Caco-2 (cell line): ENCODE measurements at regions of chr13 and their contacts with region 1.

Region 1: DNA sequence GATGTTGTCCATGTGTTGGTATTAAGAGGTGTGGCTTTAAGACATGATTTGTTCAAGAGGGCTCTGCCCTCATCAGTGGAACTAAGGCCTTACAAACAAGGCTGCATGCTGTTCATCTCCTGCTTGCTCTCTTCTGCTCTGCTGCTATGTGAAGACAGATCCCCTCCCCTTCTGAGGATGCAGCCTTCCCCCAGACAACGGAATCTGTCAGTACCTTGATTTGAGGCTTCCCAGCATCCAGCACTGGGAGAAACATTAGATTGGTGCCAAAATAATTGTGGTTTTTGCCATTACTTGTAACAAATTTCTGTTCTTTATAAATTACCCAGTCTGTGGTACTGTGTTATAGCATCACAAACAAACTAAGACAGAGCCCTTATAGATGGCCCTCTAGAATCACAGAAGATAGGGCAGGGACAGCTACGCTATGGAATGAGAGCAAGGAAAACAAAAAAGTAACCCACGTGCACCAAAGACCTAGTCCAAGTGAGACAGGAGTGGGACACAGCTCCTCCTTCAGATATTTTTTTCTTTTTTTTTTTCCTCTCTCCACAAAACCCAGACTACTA is 151.5 kb upstream of the RXFP2 start:
- DNase-seq: peak in 1 of 2 experiments; percentile 15
- H3K4me3 ChIP-seq: no peak overlapping the region
- H3K4me3 Mint-ChIP-seq: peak overlapping the region; percentile 58
- H3K27ac Mint-ChIP-seq: peak overlapping the region; percentile 96
- H3K4me1 ChIP-seq: peaks cover 54% of the 10 kb centered on the region
- H3K4me1 Mint-ChIP-seq: peaks cover 28% of the 10 kb centered on the region
- H3K27me3 ChIP-seq: no peaks in the 10 kb centered on the region
- H3K27me3 Mint-ChIP-seq: no peaks in the 10 kb centered on the region
- CTCF ChIP-seq: no peak

Region 2: DNA sequence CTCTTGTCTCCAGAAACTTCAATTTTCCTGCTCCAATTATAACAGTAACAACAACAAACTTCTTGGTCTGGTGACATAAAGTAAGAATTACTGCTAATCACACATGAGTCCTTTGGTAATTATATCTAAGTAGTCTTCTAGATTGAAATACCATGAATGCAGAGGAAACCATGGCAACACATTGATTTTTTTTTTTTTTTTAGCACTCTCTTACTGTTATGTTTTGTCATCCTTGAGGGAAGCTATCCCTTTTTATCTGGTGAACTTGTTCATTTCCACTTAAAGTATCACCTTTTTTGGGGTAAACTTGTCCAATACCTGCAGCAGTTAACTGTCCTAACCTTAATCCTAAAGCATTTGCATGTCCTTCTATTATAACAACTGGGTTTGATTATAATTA is 131.7 kb before region 1 on chr13:
- CTCF ChIA-PET with region 1: no interaction called
- POLR2A ChIA-PET with region 1: no interaction called
- intact Hi-C with region 1: no loop called
- DNase-seq: no peak
- H3K4me3 ChIP-seq: no peak overlapping the region
- H3K4me3 Mint-ChIP-seq: no peak overlapping the region
- H3K27ac Mint-ChIP-seq: no peak overlapping the region
- H3K4me1 ChIP-seq: no peaks in the 10 kb centered on the region
- H3K4me1 Mint-ChIP-seq: no peaks in the 10 kb centered on the region
- H3K27me3 ChIP-seq: no peaks in the 10 kb centered on the region; the same call in 1 of the 2 replicates
- H3K27me3 Mint-ChIP-seq: no peaks in the 10 kb centered on the region
- CTCF ChIP-seq: no peak

Region 3: GRCh38 chr13:31605076-31605858 is 17.5 kb after region 1 on chr13:
- CTCF ChIA-PET with region 1: no interaction called
- POLR2A ChIA-PET with region 1: interaction called, 4 read pairs
- intact Hi-C with region 1: loop called (anchors 1 kb)
- DNase-seq: no peak
- H3K4me3 ChIP-seq: no peak overlapping the region
- H3K4me3 Mint-ChIP-seq: no peak overlapping the region
- H3K27ac Mint-ChIP-seq: no peak overlapping the region
- H3K4me1 ChIP-seq: no peaks in the 10 kb centered on the region
- H3K4me1 Mint-ChIP-seq: no peaks in the 10 kb centered on the region
- H3K27me3 ChIP-seq: no peaks in the 10 kb centered on the region
- H3K27me3 Mint-ChIP-seq: no peaks in the 10 kb centered on the region
- CTCF ChIP-seq: no peak